ENCODE measurements at regions of chr20 and their contacts with region 1.

Region 1: DNA sequence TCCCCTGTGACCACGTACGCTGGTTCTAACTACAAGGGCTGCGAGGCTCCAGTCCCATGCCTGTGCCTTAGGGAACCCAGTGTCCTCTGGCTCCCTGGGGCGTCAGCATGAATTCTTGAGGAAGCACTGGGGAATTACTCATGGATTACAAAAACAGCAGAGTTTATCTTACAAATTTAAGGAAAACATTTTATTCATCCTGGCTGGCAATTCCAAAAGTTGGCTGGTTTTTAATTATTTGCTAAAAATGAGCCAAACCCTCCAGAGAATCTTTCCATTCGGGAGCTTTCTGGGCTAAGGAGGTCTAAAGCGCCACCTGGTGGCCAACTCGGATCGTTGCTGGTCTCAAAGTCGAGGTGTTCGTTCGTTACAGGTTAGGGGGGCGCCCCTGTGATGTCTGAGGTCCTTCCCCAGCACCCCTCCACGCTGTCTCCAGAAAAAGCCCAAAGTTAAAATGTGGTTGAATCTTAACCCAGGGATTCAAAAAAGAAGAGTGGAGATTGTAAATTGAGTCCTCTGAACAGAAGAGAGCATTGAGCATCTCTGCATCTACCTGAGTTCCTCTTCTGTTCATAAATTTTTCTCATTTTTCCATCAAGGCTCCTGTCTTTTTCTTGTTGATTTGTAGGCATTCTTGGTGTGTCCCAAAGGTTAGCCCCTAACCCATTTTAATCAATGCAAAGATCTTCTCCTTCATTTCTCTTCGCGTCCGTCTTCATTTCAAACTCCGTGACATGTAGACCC is 99.4 kb downstream of the BFSP1 start:
- DNase-seq: peak; percentile 69
- H3K4me3 ChIP-seq: peak overlapping the region in 1 of 2 experiments; percentile 40; a peak in 1 of 4 replicates
- H3K27ac ChIP-seq: no peak overlapping the region
- H3K4me1 ChIP-seq: no peaks in the 10 kb centered on the region; a peak in 1 of 4 replicates
- H3K27me3 ChIP-seq: no peaks in the 10 kb centered on the region; the same call in 1 of the 2 replicates
- CTCF ChIP-seq: peak; percentile 94
- EP300 ChIP-seq: no peak
- RAD21 ChIP-seq: peak; percentile 71

Region 2: GRCh38 chr20:16810216-16810615 is 621.6 kb before region 1 on chr20:
- CTCF ChIA-PET with region 1: interaction called, 270 read pairs
- POLR2A ChIA-PET with region 1: no interaction called
- DNase-seq: no peak
- H3K4me3 ChIP-seq: no peak overlapping the region
- H3K27ac ChIP-seq: no peak overlapping the region
- H3K4me1 ChIP-seq: no peaks in the 10 kb centered on the region
- H3K27me3 ChIP-seq: no peaks in the 10 kb centered on the region
- CTCF ChIP-seq: no peak
- EP300 ChIP-seq: no peak
- RAD21 ChIP-seq: no peak

Region 3: DNA sequence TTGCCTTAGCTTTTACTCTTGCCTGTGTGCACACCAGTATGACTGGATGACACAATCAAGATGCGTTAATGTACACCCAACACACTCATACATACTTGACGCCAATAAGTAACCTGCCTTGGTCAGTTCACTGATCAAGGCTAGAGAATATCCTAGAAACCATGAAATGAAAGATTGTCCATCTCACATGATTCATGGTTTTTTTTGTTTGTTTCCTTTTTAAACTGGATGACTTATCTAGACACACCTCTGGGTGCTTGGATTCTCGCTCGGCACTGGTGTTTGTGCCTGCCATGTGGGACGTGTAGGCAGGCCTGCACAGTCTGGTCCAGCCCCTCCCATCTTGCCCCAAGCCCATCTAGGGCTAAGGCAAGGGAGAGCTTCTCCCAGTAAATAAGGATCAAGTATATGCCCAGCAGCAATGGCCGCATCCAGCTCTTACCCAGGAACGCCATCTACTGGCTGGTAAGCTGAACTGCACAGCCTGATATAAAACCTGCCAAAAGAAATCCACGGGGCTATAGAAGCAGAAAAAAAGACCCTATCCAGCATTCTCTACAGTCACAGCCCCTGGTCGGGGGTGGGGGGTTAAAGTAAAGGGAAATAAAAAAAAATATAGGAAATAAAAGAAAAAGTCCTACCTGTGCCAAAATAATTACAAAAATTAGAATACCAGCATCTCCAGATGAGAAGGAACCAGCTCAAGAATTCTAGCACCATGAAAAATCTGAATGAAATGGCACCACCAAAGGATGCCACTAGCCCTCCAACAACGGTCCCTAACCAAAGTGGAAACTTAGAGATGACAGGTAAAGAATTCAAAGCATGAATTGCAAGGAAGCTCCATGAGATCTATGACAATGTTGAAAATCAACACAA is 610.3 kb before region 1 on chr20:
- CTCF ChIA-PET with region 1: interaction called, 19 read pairs
- POLR2A ChIA-PET with region 1: no interaction called
- DNase-seq: peak; percentile 47
- H3K4me3 ChIP-seq: peak overlapping the region in 1 of 2 experiments; percentile 51; a peak in 1 of 4 replicates
- H3K27ac ChIP-seq: no peak overlapping the region
- H3K4me1 ChIP-seq: no peaks in the 10 kb centered on the region
- H3K27me3 ChIP-seq: no peaks in the 10 kb centered on the region
- CTCF ChIP-seq: peak; percentile 88
- EP300 ChIP-seq: no peak
- RAD21 ChIP-seq: peak; percentile 75

Region 4: DNA sequence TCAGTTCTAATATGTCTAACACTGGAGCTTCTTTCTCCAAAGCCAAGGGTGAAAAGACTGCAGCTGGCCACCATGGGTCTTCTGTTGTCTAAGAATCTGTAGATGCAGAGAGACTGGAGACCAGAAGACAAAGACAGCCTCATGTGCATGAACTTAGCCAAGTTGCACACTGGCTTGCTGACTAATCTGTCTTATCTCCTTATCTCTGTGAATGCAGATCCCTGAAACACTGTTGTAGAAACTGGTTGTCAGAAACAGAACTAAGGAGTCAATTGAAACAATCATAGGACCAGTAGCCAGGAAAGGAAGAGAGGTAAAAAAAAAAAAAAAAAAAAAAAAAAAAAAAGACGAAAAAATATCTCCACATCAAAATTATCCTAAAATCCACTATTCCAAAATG is 10.3 kb before region 1 on chr20:
- CTCF ChIA-PET with region 1: interaction called, 41 read pairs
- POLR2A ChIA-PET with region 1: no interaction called
- DNase-seq: no peak
- H3K4me3 ChIP-seq: no peak overlapping the region
- H3K27ac ChIP-seq: no peak overlapping the region
- H3K4me1 ChIP-seq: no peaks in the 10 kb centered on the region
- H3K27me3 ChIP-seq: no peaks in the 10 kb centered on the region
- CTCF ChIP-seq: no peak
- EP300 ChIP-seq: no peak
- RAD21 ChIP-seq: no peak

Region 5: GRCh38 chr20:17442588-17442987 is 10.8 kb after region 1 on chr20:
- CTCF ChIA-PET with region 1: interaction called, 22 read pairs
- POLR2A ChIA-PET with region 1: no interaction called
- DNase-seq: no peak
- H3K4me3 ChIP-seq: no peak overlapping the region; a peak in 1 of 4 replicates
- H3K27ac ChIP-seq: no peak overlapping the region
- H3K4me1 ChIP-seq: no peaks in the 10 kb centered on the region
- H3K27me3 ChIP-seq: 0 out of 2 replicates have a peak, but pooled peaks cover 7% of the 10 kb centered on the region
- CTCF ChIP-seq: no peak
- EP300 ChIP-seq: no peak
- RAD21 ChIP-seq: no peak

Region 6: GRCh38 chr20:17452440-17452839 is 20.6 kb after region 1 on chr20:
- CTCF ChIA-PET with region 1: interaction called, 10 read pairs
- POLR2A ChIA-PET with region 1: no interaction called
- DNase-seq: no peak
- H3K4me3 ChIP-seq: no peak overlapping the region
- H3K27ac ChIP-seq: no peak overlapping the region
- H3K4me1 ChIP-seq: no peaks in the 10 kb centered on the region
- H3K27me3 ChIP-seq: no peaks in the 10 kb centered on the region
- CTCF ChIP-seq: no peak
- EP300 ChIP-seq: no peak
- RAD21 ChIP-seq: no peak

Measured in SK-N-SH (cell line).